ENCODE measurements at regions of chr18 and their contacts with region 1.

Region 1: GRCh38 chr18:34122724-34123334 is 101.9 kb downstream of the NOL4 start:
- DNase-seq: peak in 1 of 2 donors; percentile 12
- ATAC-seq: peak; percentile 42 to 69
- H3K4me3 ChIP-seq: no peak overlapping the region
- H3K27ac ChIP-seq: no peak overlapping the region
- H3K4me1 ChIP-seq: no peaks in the 10 kb centered on the region
- H3K27me3 ChIP-seq: no peaks in the 10 kb centered on the region
- CTCF ChIP-seq: peak; percentile 47 to 78 (median 71)
- POLR2A ChIP-seq: no peak

Region 2: GRCh38 chr18:34322365-34323289 is 199.8 kb after region 1 on chr18:
- in situ Hi-C with region 1: loop called in 1 of 4 experiments (anchors 10 kb)
- intact Hi-C with region 1: loop called (anchors 2 kb)
- DNase-seq: no peak
- ATAC-seq: no peak
- H3K4me3 ChIP-seq: no peak overlapping the region
- H3K27ac ChIP-seq: no peak overlapping the region
- H3K4me1 ChIP-seq: no peaks in the 10 kb centered on the region
- H3K27me3 ChIP-seq: no peaks in the 10 kb centered on the region
- CTCF ChIP-seq: peak in 4 of 5 experiments; percentile 8 to 52 (median 30)
- POLR2A ChIP-seq: no peak